Activated CD4-positive, alpha-beta T cell treated with anti-CD3 and anti-CD28 coated beads for 36 hours (primary cell): ENCODE measurements at regions of chr11 and their contacts with region 1.

Region 1: GRCh38 chr11:20647976-20648565 is 21.3 kb upstream of the NELL1 start:
- DNase-seq: peak; percentile 50
- ATAC-seq: no peak
- H3K4me3 Mint-ChIP-seq: no peak overlapping the region
- H3K27ac Mint-ChIP-seq: no peak overlapping the region
- H3K4me1 Mint-ChIP-seq: no peaks in the 10 kb centered on the region
- H3K27me3 Mint-ChIP-seq: peaks cover 9% of the 10 kb centered on the region

Region 2: DNA sequence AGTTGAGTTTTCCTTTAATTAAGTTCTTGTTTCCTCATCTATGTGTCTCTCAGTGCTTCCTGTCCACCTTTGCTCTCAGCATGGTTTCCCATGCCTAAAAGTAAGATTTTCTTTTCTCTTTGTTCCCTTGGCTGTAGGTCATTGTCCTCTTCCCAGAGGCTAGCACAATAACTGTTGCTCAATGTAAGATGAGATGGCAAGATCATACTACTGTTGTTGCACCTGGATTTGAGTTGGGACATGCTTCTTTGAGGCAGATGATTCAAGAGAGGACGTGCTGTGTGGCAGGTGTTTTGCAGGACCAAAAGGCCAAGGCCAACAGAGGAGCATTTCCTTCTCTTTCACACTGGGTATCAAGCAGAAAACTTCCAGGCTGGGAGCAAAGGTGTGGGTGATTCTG is 10.1 kb after region 1 on chr11:
- CTCF ChIA-PET with region 1: interaction called, 14 read pairs
- POLR2A ChIA-PET with region 1: no interaction called
- intact Hi-C with region 1: no loop called
- DNase-seq: no peak
- ATAC-seq: no peak
- H3K4me3 Mint-ChIP-seq: no peak overlapping the region
- H3K27ac Mint-ChIP-seq: no peak overlapping the region
- H3K4me1 Mint-ChIP-seq: no peaks in the 10 kb centered on the region
- H3K27me3 Mint-ChIP-seq: peaks cover 17% of the 10 kb centered on the region

Region 3: DNA sequence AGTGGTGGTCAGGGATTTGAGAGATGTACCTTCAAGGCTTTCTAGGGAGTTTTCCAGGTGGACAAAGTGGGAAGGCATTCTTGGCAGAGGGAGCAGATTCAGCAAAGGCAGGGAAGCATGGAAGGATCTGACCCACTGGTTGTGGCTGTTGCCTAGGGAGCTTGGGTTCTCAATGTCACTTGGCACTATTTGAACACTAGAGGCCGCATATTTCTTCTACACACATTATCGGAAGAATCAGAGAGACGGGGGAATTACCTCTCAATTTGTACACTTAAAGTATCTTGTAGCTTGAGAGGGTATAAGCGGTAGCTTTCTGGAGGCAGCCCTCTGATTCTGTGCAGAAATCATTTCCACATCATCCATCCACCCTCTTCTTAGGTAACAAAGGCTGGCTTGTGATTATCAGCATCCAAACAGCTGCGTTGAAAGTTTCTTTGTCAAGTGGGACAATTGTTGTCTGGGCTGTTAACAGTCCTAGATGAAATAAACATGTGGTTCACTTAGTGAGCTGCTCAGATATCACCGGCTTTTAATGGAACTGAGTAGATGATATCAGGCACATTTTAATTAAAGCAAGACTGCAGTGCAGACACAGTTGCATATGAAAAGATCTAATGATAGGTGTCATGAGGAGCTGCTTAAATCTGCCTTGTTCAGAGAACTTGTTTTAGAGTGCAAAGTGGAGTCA is 23.9 kb after region 1 on chr11:
- CTCF ChIA-PET with region 1: interaction called, 10 read pairs
- POLR2A ChIA-PET with region 1: no interaction called
- intact Hi-C with region 1: loop called (anchors 1 kb)
- DNase-seq: no peak
- ATAC-seq: no peak
- H3K4me3 Mint-ChIP-seq: no peak overlapping the region
- H3K27ac Mint-ChIP-seq: no peak overlapping the region
- H3K4me1 Mint-ChIP-seq: peaks cover 5% of the 10 kb centered on the region
- H3K27me3 Mint-ChIP-seq: peaks cover 44% of the 10 kb centered on the region

Region 4: GRCh38 chr11:20873054-20873453 is 225.0 kb after region 1 on chr11:
- CTCF ChIA-PET with region 1: no interaction called
- POLR2A ChIA-PET with region 1: no interaction called
- intact Hi-C with region 1: loop called in 1 of 2 experiments (anchors 1 kb)
- DNase-seq: peak; percentile 8
- ATAC-seq: no peak
- H3K4me3 Mint-ChIP-seq: no peak overlapping the region
- H3K27ac Mint-ChIP-seq: no peak overlapping the region
- H3K4me1 Mint-ChIP-seq: no peaks in the 10 kb centered on the region
- H3K27me3 Mint-ChIP-seq: no peaks in the 10 kb centered on the region

Region 5: DNA sequence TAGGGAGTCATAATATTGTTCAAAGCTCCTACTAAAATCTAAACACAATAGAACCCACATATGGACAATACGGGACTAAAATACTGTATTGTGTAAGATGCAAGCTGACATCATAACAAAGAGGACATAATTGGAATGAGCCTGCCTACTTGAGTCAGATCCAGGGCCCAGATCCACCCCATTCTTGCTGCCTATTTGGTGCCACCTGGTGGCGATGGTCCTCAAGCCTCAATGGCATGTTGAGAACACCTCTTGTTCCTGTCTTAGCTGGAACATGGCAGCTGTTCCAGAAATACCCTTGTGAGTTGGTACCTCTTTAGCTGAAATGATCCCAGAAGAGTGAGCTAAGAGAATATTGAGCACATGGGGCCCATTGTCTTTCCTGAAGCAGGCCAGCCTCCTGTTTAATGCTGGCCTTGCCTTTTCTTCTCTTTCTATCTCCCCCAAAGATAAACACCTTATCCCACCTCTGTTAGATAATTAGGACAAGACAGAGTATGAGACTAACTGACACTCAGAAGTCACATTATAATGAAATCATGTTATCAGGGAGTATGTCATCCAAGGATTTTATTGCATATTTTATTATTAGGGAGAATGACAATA is 863.9 kb after region 1 on chr11:
- CTCF ChIA-PET with region 1: interaction called, 10 read pairs
- POLR2A ChIA-PET with region 1: no interaction called
- intact Hi-C with region 1: loop called (anchors 1 to 5 kb)
- DNase-seq: peak; percentile 74
- ATAC-seq: peak; percentile 49
- H3K4me3 Mint-ChIP-seq: no peak overlapping the region
- H3K27ac Mint-ChIP-seq: no peak overlapping the region
- H3K4me1 Mint-ChIP-seq: no peaks in the 10 kb centered on the region
- H3K27me3 Mint-ChIP-seq: no peaks in the 10 kb centered on the region

Region 6: GRCh38 chr11:22130462-22131053 is 1482.5 kb after region 1 on chr11:
- CTCF ChIA-PET with region 1: no interaction called
- POLR2A ChIA-PET with region 1: no interaction called
- intact Hi-C with region 1: loop called in 1 of 2 experiments (anchors 2 kb)
- DNase-seq: no peak
- ATAC-seq: no peak
- H3K4me3 Mint-ChIP-seq: no peak overlapping the region
- H3K27ac Mint-ChIP-seq: no peak overlapping the region
- H3K4me1 Mint-ChIP-seq: no peaks in the 10 kb centered on the region
- H3K27me3 Mint-ChIP-seq: no peaks in the 10 kb centered on the region

Region 7: GRCh38 chr11:22304337-22304961 is 1656.4 kb after region 1 on chr11:
- CTCF ChIA-PET with region 1: interaction called, 12 read pairs
- POLR2A ChIA-PET with region 1: no interaction called
- intact Hi-C with region 1: loop called (anchors 1 to 5 kb)
- DNase-seq: no peak
- ATAC-seq: no peak
- H3K4me3 Mint-ChIP-seq: no peak overlapping the region
- H3K27ac Mint-ChIP-seq: no peak overlapping the region
- H3K4me1 Mint-ChIP-seq: no peaks in the 10 kb centered on the region
- H3K27me3 Mint-ChIP-seq: peaks cover 12% of the 10 kb centered on the region